Activated CD4-positive, alpha-beta memory T cell treated with anti-CD3 and anti-CD28 coated beads, Interleukin-2, amount 10 ng/mL, durations not matched to agents 7 days and 5 days (primary cell): ENCODE measurements at regions of chr11 and their contacts with region 1.

Region 1: DNA sequence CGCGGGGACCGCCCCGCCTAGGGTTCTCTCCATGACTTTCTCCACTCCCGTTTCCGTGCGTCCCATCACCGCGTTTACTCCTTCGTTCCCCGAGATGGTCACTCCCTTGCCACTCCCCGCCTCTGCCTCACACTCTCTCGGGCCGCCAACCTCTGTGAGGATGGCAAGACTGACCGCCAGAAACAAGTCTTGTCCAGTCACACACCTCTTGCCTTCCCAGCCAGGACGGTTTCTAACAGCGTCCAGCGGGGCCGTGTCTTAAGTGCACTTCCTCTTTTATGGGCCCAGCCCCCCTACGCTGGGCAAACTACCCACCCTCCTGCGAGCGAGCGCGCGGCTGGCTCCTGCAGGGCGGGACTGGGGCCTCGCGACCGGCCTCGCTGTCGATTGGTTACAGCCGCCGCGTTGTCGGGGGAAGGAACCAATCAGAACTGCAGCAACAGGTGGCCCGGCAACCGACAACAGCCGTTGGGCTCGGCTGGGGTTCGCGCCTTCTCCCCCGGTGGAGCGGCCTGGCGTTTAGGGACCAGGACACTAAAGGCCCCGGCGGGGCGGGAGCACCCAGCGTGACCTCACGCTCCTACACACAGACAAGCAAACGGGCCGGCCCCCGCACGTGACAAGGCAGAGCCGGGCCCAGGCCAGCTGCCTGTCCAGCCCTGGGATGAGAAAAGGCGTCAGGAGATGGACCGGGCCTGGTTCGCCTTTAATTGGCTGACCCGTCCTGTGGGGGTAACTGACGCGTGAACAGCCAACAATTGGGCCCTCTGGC is 512 bp upstream of the UCP2 start:
- DNase-seq: peak; percentile 96
- H3K4me3 Mint-ChIP-seq: peak overlapping the region; percentile 96
- H3K27ac Mint-ChIP-seq: peak overlapping the region; percentile 98
- H3K4me1 Mint-ChIP-seq: peaks cover 47% of the 10 kb centered on the region
- H3K27me3 Mint-ChIP-seq: no peaks in the 10 kb centered on the region

Region 2: DNA sequence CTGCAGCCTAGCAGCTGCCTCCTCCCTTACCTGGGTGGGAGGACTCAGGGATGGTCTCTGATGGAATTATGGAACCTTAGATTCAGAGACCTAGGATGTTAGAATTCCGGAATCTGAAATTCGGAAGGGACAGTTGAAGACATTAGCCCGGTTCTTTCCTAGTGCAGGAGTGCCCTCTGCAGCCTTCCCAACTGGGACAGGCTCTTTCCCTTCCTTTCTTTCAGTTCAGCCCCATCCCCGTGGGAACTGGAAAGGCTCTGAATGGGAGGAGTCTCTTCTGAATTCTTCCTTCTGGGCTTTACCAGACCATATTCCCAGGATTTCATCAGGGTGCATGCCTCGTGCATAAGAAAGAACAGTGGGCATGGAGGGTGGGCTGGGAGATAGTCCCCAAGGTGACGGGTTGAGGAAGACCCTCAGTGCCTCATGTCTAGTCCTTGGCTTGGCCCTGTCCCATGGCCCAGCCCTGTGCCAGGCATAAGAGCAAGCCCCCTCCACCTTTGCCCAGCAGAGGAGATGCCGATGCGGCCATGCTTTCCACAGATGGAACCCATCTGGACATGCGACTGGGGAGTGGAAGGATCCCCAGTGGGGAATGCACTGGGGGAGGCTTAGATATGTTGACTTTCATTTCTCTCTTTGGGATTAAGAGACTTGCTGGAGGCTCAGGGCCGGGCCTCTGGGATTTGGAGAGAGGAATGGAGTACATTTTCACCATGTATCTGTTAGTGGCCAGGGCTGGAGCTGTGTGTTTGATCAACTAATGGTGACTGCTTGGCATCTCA is 17.9 kb before region 1 on chr11:
- CTCF ChIA-PET with region 1: interaction called, 20 read pairs
- POLR2A ChIA-PET with region 1: interaction called, 264 read pairs
- DNase-seq: no peak
- H3K4me3 Mint-ChIP-seq: no peak overlapping the region
- H3K27ac Mint-ChIP-seq: no peak overlapping the region
- H3K4me1 Mint-ChIP-seq: peaks cover 31% of the 10 kb centered on the region
- H3K27me3 Mint-ChIP-seq: peaks cover 2% of the 10 kb centered on the region

Region 3: GRCh38 chr11:73995247-73995646 is 12.1 kb after region 1 on chr11:
- CTCF ChIA-PET with region 1: interaction called, 13 read pairs
- POLR2A ChIA-PET with region 1: interaction called, 185 read pairs
- DNase-seq: no peak
- H3K4me3 Mint-ChIP-seq: peak overlapping the region; percentile 44
- H3K27ac Mint-ChIP-seq: peak overlapping the region; percentile 87
- H3K4me1 Mint-ChIP-seq: peaks cover 70% of the 10 kb centered on the region
- H3K27me3 Mint-ChIP-seq: no peaks in the 10 kb centered on the region

Region 4: GRCh38 chr11:74004759-74005615 is 21.8 kb after region 1 on chr11:
- CTCF ChIA-PET with region 1: interaction called, 9 read pairs
- POLR2A ChIA-PET with region 1: interaction called, 185 read pairs
- DNase-seq: peak; percentile 92
- H3K4me3 Mint-ChIP-seq: peak overlapping the region; percentile 50
- H3K27ac Mint-ChIP-seq: peak overlapping the region; percentile 77
- H3K4me1 Mint-ChIP-seq: peaks cover 71% of the 10 kb centered on the region
- H3K27me3 Mint-ChIP-seq: no peaks in the 10 kb centered on the region

Region 5: DNA sequence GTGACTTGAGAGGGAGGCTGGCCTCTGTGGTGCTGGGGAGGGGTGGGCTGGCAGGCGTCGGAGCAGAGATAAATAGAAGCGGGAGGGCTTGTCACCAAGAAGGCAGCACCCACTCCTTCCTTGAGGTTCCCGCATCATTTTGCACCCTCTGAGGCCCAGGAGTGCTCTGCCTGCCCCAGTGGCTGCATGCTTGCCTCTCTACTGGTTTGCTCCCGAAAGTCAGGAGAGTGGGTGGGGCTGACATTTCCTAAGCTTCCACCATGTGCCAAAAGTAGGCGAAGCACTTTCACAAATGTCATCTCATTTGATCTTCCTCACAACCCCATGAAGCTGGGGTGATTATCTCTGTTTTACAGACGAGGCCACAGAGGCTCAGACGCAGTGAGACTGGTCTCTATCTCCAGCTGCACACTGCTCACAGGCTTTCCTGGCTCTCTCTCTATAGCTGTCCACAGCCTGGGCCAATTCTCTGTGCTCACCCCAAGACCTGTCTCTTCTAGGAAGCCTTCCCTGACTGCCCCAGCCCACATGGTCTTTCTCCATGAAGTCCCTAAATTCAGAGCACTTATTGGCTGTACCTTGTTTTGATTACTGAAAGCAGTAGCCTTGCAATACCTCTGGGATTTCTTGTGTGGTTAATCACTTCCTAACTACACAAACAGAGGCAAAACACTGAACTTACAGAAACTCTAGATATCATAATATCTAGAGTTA is 28.4 kb after region 1 on chr11:
- CTCF ChIA-PET with region 1: interaction called, 3 read pairs
- POLR2A ChIA-PET with region 1: interaction called, 117 read pairs
- DNase-seq: peak; percentile 56
- H3K4me3 Mint-ChIP-seq: no peak overlapping the region
- H3K27ac Mint-ChIP-seq: peak overlapping the region; percentile 86
- H3K4me1 Mint-ChIP-seq: peaks cover 84% of the 10 kb centered on the region
- H3K27me3 Mint-ChIP-seq: no peaks in the 10 kb centered on the region

Region 6: GRCh38 chr11:74018331-74019005 is 35.3 kb after region 1 on chr11:
- CTCF ChIA-PET with region 1: interaction called, 4 read pairs
- POLR2A ChIA-PET with region 1: interaction called, 84 read pairs
- DNase-seq: no peak
- H3K4me3 Mint-ChIP-seq: no peak overlapping the region
- H3K27ac Mint-ChIP-seq: no peak overlapping the region
- H3K4me1 Mint-ChIP-seq: peaks cover 51% of the 10 kb centered on the region
- H3K27me3 Mint-ChIP-seq: no peaks in the 10 kb centered on the region

Region 7: DNA sequence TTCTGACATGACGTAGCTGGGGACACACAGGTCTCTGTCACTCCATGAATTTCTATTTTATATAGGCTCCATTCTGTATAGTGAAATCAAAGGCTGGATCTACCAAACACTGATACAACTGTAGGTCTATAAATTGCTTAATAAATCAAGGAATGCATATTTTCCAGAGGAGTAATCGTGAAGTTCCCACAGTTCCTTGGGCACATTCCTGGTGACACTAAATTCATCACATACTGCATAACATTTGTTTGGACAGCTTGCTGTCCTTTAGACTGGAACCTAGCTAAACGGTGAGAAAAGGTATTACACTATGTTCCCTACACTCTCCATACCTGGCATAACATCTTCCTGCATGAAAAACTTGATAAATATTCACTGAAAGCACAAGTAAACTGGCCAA is 67.3 kb after region 1 on chr11:
- CTCF ChIA-PET with region 1: no interaction called
- POLR2A ChIA-PET with region 1: no interaction called
- DNase-seq: no peak
- H3K4me3 Mint-ChIP-seq: no peak overlapping the region
- H3K27ac Mint-ChIP-seq: no peak overlapping the region
- H3K4me1 Mint-ChIP-seq: no peaks in the 10 kb centered on the region
- H3K27me3 Mint-ChIP-seq: no peaks in the 10 kb centered on the region

Region 8: GRCh38 chr11:74170694-74171629 is 187.8 kb after region 1 on chr11 and contains the starts of genes C2CD3 and PPME1:
- CTCF ChIA-PET with region 1: interaction called, 12 read pairs
- POLR2A ChIA-PET with region 1: interaction called, 17 read pairs
- DNase-seq: peak; percentile 99
- H3K4me3 Mint-ChIP-seq: no peak within 1 kb of the TSS
- H3K27ac Mint-ChIP-seq: no peak within 1 kb of the TSS
- H3K4me1 Mint-ChIP-seq: peaks cover 24% of the 10 kb centered on the region
- H3K27me3 Mint-ChIP-seq: no peaks in the 10 kb centered on the region
- total RNA-seq, gene C2CD3: 30.8 to 32.2 TPM
- total RNA-seq, gene PPME1: 27.3 to 28.0 TPM